ENCODE measurements at regions of chr9 and their contacts with region 1.

Region 1: DNA sequence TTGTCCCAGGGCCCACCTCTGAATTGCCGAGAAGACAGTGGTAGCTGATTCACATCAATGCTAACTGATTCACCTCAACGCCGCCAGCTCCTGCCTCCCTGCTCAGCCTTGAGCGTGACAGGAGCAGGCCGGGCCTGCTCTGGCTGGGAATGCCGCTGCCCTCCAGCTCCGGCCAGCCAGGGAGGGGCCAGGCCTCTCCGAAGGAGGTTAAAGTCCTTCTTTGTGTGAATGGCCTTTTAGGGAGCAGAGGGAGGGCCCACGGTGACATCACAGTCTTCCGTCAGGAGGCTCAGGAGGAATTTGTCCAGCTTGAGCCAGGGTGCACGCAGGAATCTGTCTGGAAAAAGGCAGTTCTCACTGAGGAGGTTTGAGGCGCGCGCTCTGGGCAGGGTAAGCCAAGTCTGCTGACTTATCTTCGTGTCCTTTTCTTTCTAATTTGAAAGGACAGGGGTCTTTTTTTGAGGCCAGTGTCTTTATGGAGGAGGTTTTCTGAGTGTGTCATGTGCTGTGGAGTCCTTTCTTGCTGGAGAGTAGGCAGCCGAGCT is 82.7 kb downstream of the C9orf152 start:
- DNase-seq: peak; percentile 93 to 95 (median 93)
- ATAC-seq: peak; percentile 93 to 94
- H3K4me3 ChIP-seq: peak overlapping the region; percentile 51
- H3K27ac ChIP-seq: peak overlapping the region; percentile 99
- H3K4me1 ChIP-seq: peaks cover 26% of the 10 kb centered on the region
- H3K27me3 ChIP-seq: no peaks in the 10 kb centered on the region

Region 2: DNA sequence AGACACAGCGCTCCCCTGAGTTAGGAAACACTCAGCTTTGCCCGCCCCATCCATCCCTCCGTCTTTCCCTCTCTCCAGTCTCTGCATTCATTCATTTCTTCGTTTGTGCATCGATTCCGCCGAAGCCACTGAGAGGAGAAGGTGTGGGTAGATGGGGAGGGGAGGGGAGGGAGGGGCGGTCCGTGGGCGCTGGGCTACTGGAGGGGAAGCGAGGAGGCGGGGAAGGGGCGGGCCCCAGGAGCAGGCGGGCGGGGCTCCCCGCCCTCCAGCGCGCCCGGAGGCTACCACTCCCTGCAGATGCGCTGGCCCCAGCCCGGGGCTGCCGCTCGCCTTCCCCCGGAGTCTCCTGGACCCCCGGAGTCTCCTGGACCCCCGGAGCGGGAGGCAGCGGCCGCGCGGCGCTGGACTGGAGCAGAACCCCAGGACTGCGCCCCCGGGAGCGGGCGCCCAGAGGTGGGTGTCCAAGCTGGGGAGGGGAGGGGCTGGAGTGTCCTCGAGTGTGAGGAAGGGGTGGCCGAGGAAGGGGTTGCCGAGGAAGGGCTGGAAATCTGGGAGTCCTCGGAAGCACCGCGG is 76.8 kb before region 1 on chr9:
- intact Hi-C with region 1: loop called in 1 of 4 experiments (anchors 10 kb)
- DNase-seq: peak; percentile 86 to 94 (median 92)
- ATAC-seq: peak; percentile 96 to 97
- H3K4me3 ChIP-seq: peak overlapping the region; percentile 92
- H3K27ac ChIP-seq: peak overlapping the region; percentile 77
- H3K4me1 ChIP-seq: peaks cover 8% of the 10 kb centered on the region
- H3K27me3 ChIP-seq: no peaks in the 10 kb centered on the region